ENCODE measurements at regions of chr2 and their contacts with region 1.

Region 1: GRCh38 chr2:102585847-102586431 is 33.4 kb upstream of the SLC9A2 start:
- DNase-seq: peak; percentile 84 to 90
- H3K4me3 ChIP-seq: no peak overlapping the region
- H3K4me3 Mint-ChIP-seq: peak overlapping the region; percentile 45
- H3K27ac Mint-ChIP-seq: peak overlapping the region; percentile 82
- H3K4me1 ChIP-seq: peaks cover 37% of the 10 kb centered on the region
- H3K4me1 Mint-ChIP-seq: peaks cover 16% of the 10 kb centered on the region
- H3K27me3 ChIP-seq: no peaks in the 10 kb centered on the region
- H3K27me3 Mint-ChIP-seq: no peaks in the 10 kb centered on the region
- CTCF ChIP-seq: peak; percentile 26 to 60

Region 2: DNA sequence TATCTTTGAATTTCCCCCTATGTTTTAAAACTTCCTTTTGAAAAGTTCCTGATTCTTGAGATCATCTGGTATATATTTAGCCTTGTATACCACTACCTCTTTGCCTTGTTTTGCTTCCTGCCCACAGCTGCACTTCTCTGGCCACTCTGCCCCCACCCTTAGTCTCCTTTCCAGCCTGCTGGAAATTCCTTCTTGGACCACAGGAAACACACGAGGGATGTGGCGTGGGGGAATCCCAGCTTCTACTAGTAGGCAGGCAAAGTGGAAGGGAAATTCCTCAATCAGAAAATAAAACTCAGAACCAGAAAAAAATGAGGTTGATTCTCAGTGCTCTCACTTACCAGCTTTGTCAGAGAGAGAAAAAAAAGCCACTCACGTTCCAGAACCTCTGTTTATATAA is 149.6 kb before region 1 on chr2:
- CTCF ChIA-PET with region 1: no interaction called
- POLR2A ChIA-PET with region 1: no interaction called
- intact Hi-C with region 1: no loop called
- DNase-seq: no peak
- H3K4me3 ChIP-seq: no peak overlapping the region
- H3K4me3 Mint-ChIP-seq: no peak overlapping the region
- H3K27ac Mint-ChIP-seq: no peak overlapping the region
- H3K4me1 ChIP-seq: no peaks in the 10 kb centered on the region
- H3K4me1 Mint-ChIP-seq: no peaks in the 10 kb centered on the region
- H3K27me3 ChIP-seq: no peaks in the 10 kb centered on the region
- H3K27me3 Mint-ChIP-seq: peaks cover 9% of the 10 kb centered on the region
- CTCF ChIP-seq: no peak

Region 3: DNA sequence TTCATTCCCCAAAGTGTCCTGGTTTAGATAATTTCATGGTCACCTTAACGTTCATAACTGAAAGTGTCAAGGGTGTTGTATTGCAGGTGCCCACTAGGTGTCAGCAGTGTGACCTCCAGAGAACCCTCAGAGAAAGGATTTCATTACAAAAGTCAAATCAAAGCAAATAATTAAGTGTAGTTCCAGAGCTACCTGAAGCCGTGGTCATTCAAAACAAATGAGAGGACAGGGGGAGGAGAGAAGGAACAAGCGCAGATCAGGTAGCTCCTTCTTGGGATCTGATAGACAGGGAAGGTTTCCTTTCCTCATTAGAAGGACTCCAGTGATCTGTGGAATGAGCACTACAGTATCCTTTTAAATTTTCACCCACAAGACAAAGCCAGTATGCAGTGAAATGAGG is 112.9 kb before region 1 on chr2 and contains the start of gene SLC9A4:
- CTCF ChIA-PET with region 1: interaction called, 16 read pairs
- POLR2A ChIA-PET with region 1: no interaction called
- intact Hi-C with region 1: loop called (anchors 1 kb)
- DNase-seq: peak; percentile 63 to 72
- H3K4me3 ChIP-seq: no peak within 1 kb of the TSS
- H3K4me3 Mint-ChIP-seq: no peak within 1 kb of the TSS
- H3K27ac Mint-ChIP-seq: no peak within 1 kb of the TSS
- H3K4me1 ChIP-seq: peaks cover 17% of the 10 kb centered on the region
- H3K4me1 Mint-ChIP-seq: no peaks in the 10 kb centered on the region
- H3K27me3 ChIP-seq: no peaks in the 10 kb centered on the region
- H3K27me3 Mint-ChIP-seq: no peaks in the 10 kb centered on the region
- CTCF ChIP-seq: peak; percentile 89 to 91
- total RNA-seq, gene SLC9A4: 1.2 and 1.4 TPM in 2 replicates

Region 4: DNA sequence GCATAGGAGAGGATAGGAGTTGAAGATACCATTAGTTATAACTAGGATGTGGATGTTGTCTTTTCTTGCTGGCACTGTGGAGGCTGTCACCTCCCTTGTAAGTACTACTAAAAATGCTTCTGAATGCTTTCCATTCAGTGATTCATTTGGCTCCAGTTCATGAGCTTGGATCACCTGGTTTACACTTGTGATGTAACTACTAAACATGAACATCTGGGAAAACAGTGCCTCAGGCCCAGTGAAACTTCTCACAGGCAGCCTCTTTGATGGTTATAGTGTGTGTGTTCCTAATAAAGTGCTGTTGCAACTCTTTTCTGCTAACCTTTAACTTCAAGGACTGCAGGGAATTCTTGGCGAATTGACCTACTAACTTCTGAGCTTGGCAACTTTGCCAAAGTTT is 20.4 kb after region 1 on chr2:
- CTCF ChIA-PET with region 1: interaction called, 11 read pairs
- POLR2A ChIA-PET with region 1: interaction called, 3 read pairs
- intact Hi-C with region 1: no loop called
- DNase-seq: peak; percentile 61 to 70
- H3K4me3 ChIP-seq: no peak overlapping the region
- H3K4me3 Mint-ChIP-seq: no peak overlapping the region
- H3K27ac Mint-ChIP-seq: no peak overlapping the region
- H3K4me1 ChIP-seq: peaks cover 40% of the 10 kb centered on the region
- H3K4me1 Mint-ChIP-seq: peaks cover 9% of the 10 kb centered on the region
- H3K27me3 ChIP-seq: no peaks in the 10 kb centered on the region
- H3K27me3 Mint-ChIP-seq: no peaks in the 10 kb centered on the region
- CTCF ChIP-seq: no peak

Region 5: GRCh38 chr2:102703748-102704147 is 117.8 kb after region 1 on chr2:
- CTCF ChIA-PET with region 1: interaction called, 33 read pairs
- POLR2A ChIA-PET with region 1: no interaction called
- intact Hi-C with region 1: loop called (anchors 1 kb)
- DNase-seq: peak in 1 of 2 experiments; percentile 39
- H3K4me3 ChIP-seq: no peak overlapping the region
- H3K4me3 Mint-ChIP-seq: no peak overlapping the region
- H3K27ac Mint-ChIP-seq: no peak overlapping the region
- H3K4me1 ChIP-seq: no peaks in the 10 kb centered on the region; the same call in 1 of the 2 replicates
- H3K4me1 Mint-ChIP-seq: peaks cover 17% of the 10 kb centered on the region
- H3K27me3 ChIP-seq: no peaks in the 10 kb centered on the region
- H3K27me3 Mint-ChIP-seq: no peaks in the 10 kb centered on the region
- CTCF ChIP-seq: peak in 1 of 2 experiments; percentile 60

Region 6: GRCh38 chr2:102806250-102806837 is 220.4 kb after region 1 on chr2:
- CTCF ChIA-PET with region 1: interaction called, 14 read pairs
- POLR2A ChIA-PET with region 1: no interaction called
- intact Hi-C with region 1: loop called (anchors 1 kb)
- DNase-seq: peak; percentile 66 to 80
- H3K4me3 ChIP-seq: no peak overlapping the region
- H3K4me3 Mint-ChIP-seq: no peak overlapping the region
- H3K27ac Mint-ChIP-seq: no peak overlapping the region
- H3K4me1 ChIP-seq: peaks cover 10% of the 10 kb centered on the region
- H3K4me1 Mint-ChIP-seq: no peaks in the 10 kb centered on the region
- H3K27me3 ChIP-seq: no peaks in the 10 kb centered on the region
- H3K27me3 Mint-ChIP-seq: no peaks in the 10 kb centered on the region
- CTCF ChIP-seq: peak; percentile 85 to 90

Region 7: GRCh38 chr2:103338819-103339218 is 752.9 kb after region 1 on chr2:
- CTCF ChIA-PET with region 1: no interaction called
- POLR2A ChIA-PET with region 1: no interaction called
- intact Hi-C with region 1: no loop called
- DNase-seq: no peak
- H3K4me3 ChIP-seq: no peak overlapping the region
- H3K4me3 Mint-ChIP-seq: no peak overlapping the region
- H3K27ac Mint-ChIP-seq: no peak overlapping the region
- H3K4me1 ChIP-seq: no peaks in the 10 kb centered on the region
- H3K4me1 Mint-ChIP-seq: no peaks in the 10 kb centered on the region
- H3K27me3 ChIP-seq: no peaks in the 10 kb centered on the region
- H3K27me3 Mint-ChIP-seq: peaks cover 6% of the 10 kb centered on the region
- CTCF ChIP-seq: no peak